ENCODE measurements at regions of chr12 and their contacts with region 1.

Region 1: GRCh38 chr12:53984901-53985709 is at the start of gene HOXC10:
- DNase-seq: peak; percentile 89 to 95 (median 95)
- H3K4me3 ChIP-seq: peak within 1 kb of the TSS; percentile 42
- H3K27ac ChIP-seq: no peak within 1 kb of the TSS
- H3K4me1 ChIP-seq: peaks cover 4% of the 10 kb centered on the region
- H3K27me3 ChIP-seq: peaks cover 2% of the 10 kb centered on the region
- CTCF ChIP-seq: peak; percentile 21 to 73 (median 64)
- EP300 ChIP-seq: no peak
- POLR2A ChIP-seq: no peak
- total RNA-seq, gene HOXC10: 0.15 to 5.0 (median 0.23) TPM in 5 of 7 donors, not detected in the others

Region 2: DNA sequence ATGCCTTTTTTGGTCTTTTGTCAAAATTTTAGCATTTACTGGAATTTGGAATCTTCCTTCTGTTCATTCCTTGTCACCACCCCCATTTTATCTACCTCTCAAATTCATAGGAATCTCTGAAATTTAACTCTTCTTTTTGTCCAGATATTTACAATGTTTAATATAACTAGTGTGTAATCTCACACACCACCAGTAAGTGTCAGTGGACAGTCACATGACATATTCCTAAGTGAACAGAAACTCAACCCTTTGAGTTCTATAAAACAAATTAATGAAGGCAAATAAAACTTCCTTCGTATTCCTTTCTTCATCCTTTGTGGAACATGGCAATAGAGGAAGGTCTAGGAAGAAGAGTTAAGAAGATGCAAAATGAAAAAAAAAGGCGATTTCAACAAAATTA is 385.5 kb before region 1 on chr12:
- intact Hi-C with region 1: no loop called
- DNase-seq: no peak
- H3K4me3 ChIP-seq: no peak overlapping the region
- H3K27ac ChIP-seq: no peak overlapping the region
- H3K4me1 ChIP-seq: peaks cover 5% of the 10 kb centered on the region
- H3K27me3 ChIP-seq: no peaks in the 10 kb centered on the region
- CTCF ChIP-seq: no peak
- EP300 ChIP-seq: no peak
- POLR2A ChIP-seq: no peak

Region 3: GRCh38 chr12:53844989-53845844 is 139.9 kb before region 1 on chr12:
- intact Hi-C with region 1: no loop called
- DNase-seq: no peak
- H3K4me3 ChIP-seq: no peak overlapping the region
- H3K27ac ChIP-seq: no peak overlapping the region
- H3K4me1 ChIP-seq: no peaks in the 10 kb centered on the region
- H3K27me3 ChIP-seq: no peaks in the 10 kb centered on the region
- CTCF ChIP-seq: no peak
- EP300 ChIP-seq: no peak
- POLR2A ChIP-seq: no peak

Region 4: GRCh38 chr12:54207484-54208294 is 222.6 kb after region 1 on chr12:
- intact Hi-C with region 1: loop called in 2 of 4 experiments (anchors 5 kb)
- DNase-seq: peak; percentile 70 to 86 (median 84)
- H3K4me3 ChIP-seq: no peak overlapping the region
- H3K27ac ChIP-seq: no peak overlapping the region
- H3K4me1 ChIP-seq: no peaks in the 10 kb centered on the region
- H3K27me3 ChIP-seq: no peaks in the 10 kb centered on the region
- CTCF ChIP-seq: peak; percentile 88 to 94 (median 89)
- EP300 ChIP-seq: no peak
- POLR2A ChIP-seq: no peak

Region 5: GRCh38 chr12:54214553-54215406 is 229.7 kb after region 1 on chr12:
- intact Hi-C with region 1: loop called in 2 of 4 experiments (anchors 5 kb)
- DNase-seq: peak; percentile 83 to 90 (median 86)
- H3K4me3 ChIP-seq: no peak overlapping the region
- H3K27ac ChIP-seq: no peak overlapping the region
- H3K4me1 ChIP-seq: peaks cover 4% of the 10 kb centered on the region
- H3K27me3 ChIP-seq: no peaks in the 10 kb centered on the region
- CTCF ChIP-seq: peak; percentile 76 to 89 (median 86)
- EP300 ChIP-seq: no peak
- POLR2A ChIP-seq: no peak

Region 6: GRCh38 chr12:54359033-54359761 is 374.1 kb after region 1 on chr12:
- intact Hi-C with region 1: loop called in 2 of 4 experiments (anchors 10 kb)
- DNase-seq: peak; percentile 95 to 98 (median 97)
- H3K4me3 ChIP-seq: peak overlapping the region; percentile 45
- H3K27ac ChIP-seq: peak overlapping the region; percentile 79 to 88
- H3K4me1 ChIP-seq: peaks cover 1% of the 10 kb centered on the region
- H3K27me3 ChIP-seq: no peaks in the 10 kb centered on the region
- CTCF ChIP-seq: no peak
- EP300 ChIP-seq: no peak
- POLR2A ChIP-seq: peak; percentile 35

Region 7: DNA sequence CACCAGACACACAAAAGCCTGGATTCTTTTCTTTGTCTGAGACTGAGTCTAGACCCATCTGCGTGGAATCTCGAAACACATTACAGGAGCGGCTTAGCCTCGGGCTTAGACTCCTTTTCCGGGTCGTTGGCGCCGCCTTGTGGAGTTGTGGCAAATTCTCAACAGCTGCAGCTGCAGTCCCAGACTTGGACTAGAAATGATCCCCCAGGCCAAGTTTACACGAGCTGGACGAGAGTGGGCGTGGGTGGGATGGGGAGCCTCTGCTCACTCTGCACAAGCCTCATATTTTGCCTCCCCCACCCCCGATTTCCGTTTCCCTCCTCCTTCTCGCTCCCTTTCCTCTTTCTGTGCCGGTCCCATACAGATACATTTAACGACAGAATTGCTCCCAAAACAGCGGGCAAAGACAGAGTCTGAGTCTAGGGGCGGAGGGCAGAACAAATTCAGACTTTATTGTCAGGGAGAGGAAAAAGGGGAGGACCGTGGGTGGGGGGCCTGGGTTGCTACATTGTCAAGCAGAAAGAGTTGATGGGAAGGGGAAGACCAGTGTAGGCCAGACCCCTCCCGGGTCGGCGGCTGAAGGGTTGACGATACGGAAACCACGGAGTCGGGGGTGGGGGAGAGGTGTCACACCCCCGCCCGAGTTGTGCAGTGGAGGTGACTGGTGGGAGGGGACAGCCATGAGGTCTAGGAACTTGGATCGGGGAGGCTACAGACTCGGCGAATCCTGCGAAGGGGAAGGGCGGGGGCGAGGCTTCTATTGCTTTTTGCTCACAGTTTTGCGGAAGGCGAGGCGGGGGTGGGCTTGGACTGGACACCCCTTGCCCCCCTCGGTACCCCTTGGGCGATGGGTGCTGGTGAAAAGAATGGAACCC is 383.8 kb after region 1 on chr12:
- intact Hi-C with region 1: loop called in 2 of 4 experiments (anchors 10 kb)
- DNase-seq: peak; percentile 90 to 94 (median 94)
- H3K4me3 ChIP-seq: peak overlapping the region; percentile 42
- H3K27ac ChIP-seq: peak overlapping the region; percentile 67 to 76
- H3K4me1 ChIP-seq: peaks cover 12% of the 10 kb centered on the region
- H3K27me3 ChIP-seq: no peaks in the 10 kb centered on the region
- CTCF ChIP-seq: peak; percentile 42 to 89 (median 86)
- EP300 ChIP-seq: no peak
- POLR2A ChIP-seq: no peak

Region 8: GRCh38 chr12:54379401-54380201 is 394.5 kb after region 1 on chr12:
- intact Hi-C with region 1: loop called in 1 of 4 experiments (anchors 10 kb)
- DNase-seq: peak; percentile 90 to 95 (median 93)
- H3K4me3 ChIP-seq: peak overlapping the region; percentile 37
- H3K27ac ChIP-seq: no peak overlapping the region
- H3K4me1 ChIP-seq: peaks cover 3% of the 10 kb centered on the region
- H3K27me3 ChIP-seq: no peaks in the 10 kb centered on the region
- CTCF ChIP-seq: peak; percentile 99 to 100 (median 100)
- EP300 ChIP-seq: no peak
- POLR2A ChIP-seq: no peak

Measured in ovary (tissue), 10 donors.